MCF 10A (cell line): ENCODE measurements at regions of chr1 and their contacts with region 1.

Region 1: DNA sequence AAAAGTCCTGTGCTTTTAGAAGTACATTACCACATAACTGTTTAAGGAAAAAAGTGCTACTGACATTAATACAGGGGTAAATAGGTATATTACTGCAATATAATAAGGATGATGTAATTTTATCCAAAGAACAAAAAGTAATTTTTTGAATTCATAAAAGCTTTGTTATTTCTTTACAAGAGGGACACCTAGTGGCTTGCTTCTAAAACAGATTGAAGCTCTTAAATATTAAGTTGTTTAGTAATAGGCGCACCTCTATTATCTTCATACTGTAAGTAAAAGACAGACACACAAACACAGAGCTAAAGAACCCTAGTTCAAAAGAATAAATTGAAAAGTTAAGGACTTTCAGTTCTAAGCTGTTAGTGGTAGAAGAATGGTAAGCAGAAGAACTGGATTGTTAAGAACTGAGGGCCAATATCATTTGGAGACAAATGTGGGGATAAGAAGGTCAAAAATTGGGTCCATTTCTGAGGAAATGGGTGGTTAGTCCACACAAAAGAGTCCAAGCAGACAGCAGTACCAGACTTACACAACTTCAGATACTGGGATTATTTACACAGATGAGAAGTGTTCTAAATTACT is 15.4 kb downstream of the ZNHIT6 start:
- DNase-seq: peak; percentile 52
- H3K4me3 Mint-ChIP-seq: no peak overlapping the region
- H3K27ac Mint-ChIP-seq: peak overlapping the region; percentile 65
- H3K4me1 Mint-ChIP-seq: peaks cover 10% of the 10 kb centered on the region
- H3K27me3 Mint-ChIP-seq: no peaks in the 10 kb centered on the region
- CTCF ChIP-seq: peak; percentile 60

Region 2: GRCh38 chr1:85224734-85225623 is 467.8 kb before region 1 on chr1:
- CTCF ChIA-PET with region 1: no interaction called
- POLR2A ChIA-PET with region 1: no interaction called
- intact Hi-C with region 1: no loop called
- DNase-seq: no peak
- H3K4me3 Mint-ChIP-seq: no peak overlapping the region
- H3K27ac Mint-ChIP-seq: no peak overlapping the region
- H3K4me1 Mint-ChIP-seq: no peaks in the 10 kb centered on the region
- H3K27me3 Mint-ChIP-seq: no peaks in the 10 kb centered on the region
- CTCF ChIP-seq: no peak

Region 3: DNA sequence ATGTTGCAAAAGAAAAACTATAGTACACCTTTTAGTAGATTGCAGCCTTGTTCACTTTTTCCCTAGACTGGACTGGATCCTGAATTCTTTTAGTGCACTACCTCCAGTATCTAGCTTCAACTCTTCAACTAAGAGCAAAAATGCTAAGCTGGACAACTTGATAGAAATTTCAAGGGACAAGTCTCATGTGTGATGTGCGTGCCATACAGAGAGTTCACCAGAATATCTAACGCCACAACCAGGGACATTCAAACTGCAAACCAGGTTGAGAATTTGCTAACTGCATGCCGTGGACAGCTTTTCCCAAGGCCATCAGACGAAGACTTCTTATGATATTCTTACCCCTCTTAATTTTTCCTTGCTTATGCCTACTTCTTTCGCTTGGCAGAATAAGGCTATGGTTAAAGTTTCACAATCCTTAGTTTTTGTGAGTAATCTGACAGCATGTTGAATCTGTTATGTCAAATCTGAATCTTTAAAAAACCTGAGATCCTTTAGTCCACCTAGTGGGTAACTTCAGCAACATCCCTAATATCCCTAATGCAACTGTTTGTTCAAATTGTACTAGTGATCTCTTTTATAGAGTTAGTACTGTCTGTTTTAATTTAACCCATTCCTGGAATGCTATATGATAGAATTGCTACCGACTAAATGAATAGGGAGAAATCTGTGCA is 294.3 kb before region 1 on chr1:
- CTCF ChIA-PET with region 1: interaction called, 7 read pairs
- POLR2A ChIA-PET with region 1: no interaction called
- intact Hi-C with region 1: loop called (anchors 1 kb)
- DNase-seq: peak; percentile 66
- H3K4me3 Mint-ChIP-seq: no peak overlapping the region
- H3K27ac Mint-ChIP-seq: no peak overlapping the region
- H3K4me1 Mint-ChIP-seq: peaks cover 7% of the 10 kb centered on the region
- H3K27me3 Mint-ChIP-seq: no peaks in the 10 kb centered on the region
- CTCF ChIP-seq: peak; percentile 44

Region 4: DNA sequence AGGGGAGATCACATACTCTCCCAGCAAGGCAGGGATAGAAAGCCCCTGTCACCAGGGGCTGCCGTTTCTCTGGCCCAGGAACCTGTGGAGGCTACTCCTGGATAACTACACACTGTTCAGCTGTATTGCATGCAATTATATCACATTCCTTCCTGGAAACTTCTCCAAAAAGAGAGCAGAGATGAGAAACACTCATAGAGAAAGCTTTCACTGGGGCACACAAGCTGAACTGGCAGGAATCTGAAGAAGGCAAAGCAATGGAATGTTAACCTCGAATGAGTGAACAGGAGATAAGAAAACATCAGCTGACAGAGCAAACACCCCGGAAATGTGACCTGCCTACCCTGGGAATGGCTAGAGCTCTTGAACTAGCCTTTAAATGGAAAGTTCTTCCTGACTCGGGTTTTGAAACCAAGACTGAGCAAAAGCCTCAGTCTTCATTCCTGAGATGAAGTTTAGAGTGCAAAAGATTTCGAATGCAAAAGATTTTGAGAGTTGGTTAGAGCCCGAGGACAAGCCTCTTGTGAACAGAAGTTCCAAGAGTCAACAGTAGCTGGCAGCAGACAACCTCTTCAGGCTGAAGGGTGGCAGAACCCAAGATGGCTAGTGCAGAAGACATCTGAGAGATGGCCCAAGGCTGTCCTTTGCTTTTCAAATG is 80.0 kb before region 1 on chr1:
- CTCF ChIA-PET with region 1: interaction called, 17 read pairs
- POLR2A ChIA-PET with region 1: no interaction called
- intact Hi-C with region 1: no loop called
- DNase-seq: peak; percentile 59
- H3K4me3 Mint-ChIP-seq: no peak overlapping the region
- H3K27ac Mint-ChIP-seq: peak overlapping the region; percentile 68
- H3K4me1 Mint-ChIP-seq: peaks cover 30% of the 10 kb centered on the region
- H3K27me3 Mint-ChIP-seq: no peaks in the 10 kb centered on the region
- CTCF ChIP-seq: peak; percentile 38

Region 5: GRCh38 chr1:85681087-85681486 is 11.7 kb before region 1 on chr1:
- CTCF ChIA-PET with region 1: interaction called, 11 read pairs
- POLR2A ChIA-PET with region 1: interaction called, 8 read pairs
- intact Hi-C with region 1: no loop called
- DNase-seq: no peak
- H3K4me3 Mint-ChIP-seq: no peak overlapping the region
- H3K27ac Mint-ChIP-seq: no peak overlapping the region
- H3K4me1 Mint-ChIP-seq: no peaks in the 10 kb centered on the region
- H3K27me3 Mint-ChIP-seq: no peaks in the 10 kb centered on the region
- CTCF ChIP-seq: no peak